K562 (cell line): ENCODE measurements at regions of chrX and their contacts with region 1.

Region 1: GRCh38 chrX:1657367-1658070 is 42.7 kb downstream of the ASMT start:
- DNase-seq: no peak
- ATAC-seq: no peak
- H3K4me3 ChIP-seq: no peak overlapping the region
- H3K27ac ChIP-seq: no peak overlapping the region
- H3K4me1 ChIP-seq: no peaks in the 10 kb centered on the region; a peak in 1 of 5 replicates
- H3K27me3 ChIP-seq: peaks cover 0 to 8% of the 10 kb centered on the region in 2 experiments; a peak in 1 of 5 replicates
- CTCF ChIP-seq: no peak
- EP300 ChIP-seq: no peak
- POLR2A ChIP-seq: no peak
- RAD21 ChIP-seq: no peak

Region 2: DNA sequence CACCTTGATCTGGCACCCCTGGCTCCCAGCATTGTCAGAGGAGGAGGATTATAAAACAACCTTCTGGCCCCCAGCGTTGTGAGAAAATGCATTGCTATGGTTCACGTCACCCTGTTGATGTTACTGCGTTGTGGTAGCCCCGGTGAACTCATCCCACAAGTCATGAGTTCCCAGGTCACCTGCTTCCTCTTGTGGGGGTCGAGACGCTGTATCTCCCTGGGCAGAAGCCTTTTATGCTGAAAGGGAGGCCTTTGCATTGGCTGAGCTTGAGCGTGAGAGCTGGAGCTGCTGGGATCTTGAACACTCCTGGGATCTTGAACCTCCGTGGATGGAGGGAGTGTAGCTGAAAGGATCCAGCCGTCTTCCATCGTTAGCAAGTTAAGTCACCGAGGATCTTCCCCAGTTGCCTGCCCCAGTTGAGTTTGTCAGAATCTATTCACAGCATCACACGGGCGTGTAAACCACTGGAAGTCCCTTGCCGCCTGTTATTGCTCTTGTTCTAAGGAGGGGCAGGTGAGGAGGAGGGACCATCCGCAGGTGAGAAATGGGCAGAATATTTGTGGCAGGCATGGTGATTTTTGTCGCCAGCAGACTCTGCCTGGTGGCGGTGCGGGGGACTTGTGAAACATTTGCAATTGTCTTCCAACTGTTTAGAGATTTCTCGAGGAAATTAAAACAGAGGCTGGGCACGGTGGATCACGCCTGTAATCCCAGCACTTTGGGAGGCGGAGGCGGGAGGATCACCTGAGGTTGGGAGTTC is 257.3 kb after region 1 on chrX:
- CTCF ChIA-PET with region 1: no interaction called
- POLR2A ChIA-PET with region 1: no interaction called
- in situ Hi-C with region 1: no loop called
- intact Hi-C with region 1: no loop called
- DNase-seq: no peak
- ATAC-seq: no peak
- H3K4me3 ChIP-seq: no peak overlapping the region
- H3K27ac ChIP-seq: no peak overlapping the region
- H3K4me1 ChIP-seq: no peaks in the 10 kb centered on the region; a peak in 2 of 5 replicates
- H3K27me3 ChIP-seq: no peaks in the 10 kb centered on the region
- CTCF ChIP-seq: no peak
- EP300 ChIP-seq: no peak
- POLR2A ChIP-seq: no peak
- RAD21 ChIP-seq: no peak

Region 3: DNA sequence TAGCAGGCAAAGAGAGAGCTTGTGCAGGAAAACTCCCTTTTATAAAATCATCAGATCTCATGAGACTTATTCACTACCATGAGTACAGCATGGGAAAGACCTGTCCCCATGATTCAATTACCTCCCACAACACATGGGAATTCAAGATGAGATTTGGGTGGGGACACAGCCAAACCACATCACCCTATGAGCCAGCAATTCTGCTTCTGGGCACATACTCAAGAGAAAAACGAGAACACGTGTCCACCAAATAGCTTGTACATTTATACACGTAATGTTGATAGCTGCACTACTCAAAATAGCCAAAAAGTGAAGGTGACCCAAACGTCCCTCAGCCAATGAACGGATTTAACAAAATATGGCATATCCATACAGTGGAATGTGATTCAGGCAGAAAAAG is 937.7 kb after region 1 on chrX:
- CTCF ChIA-PET with region 1: no interaction called
- POLR2A ChIA-PET with region 1: no interaction called
- in situ Hi-C with region 1: loop called (anchors 25 kb)
- intact Hi-C with region 1: loop called (anchors 1 kb)
- DNase-seq: no peak
- ATAC-seq: no peak
- H3K4me3 ChIP-seq: no peak overlapping the region
- H3K27ac ChIP-seq: no peak overlapping the region
- H3K4me1 ChIP-seq: no peaks in the 10 kb centered on the region
- H3K27me3 ChIP-seq: no peaks in the 10 kb centered on the region
- CTCF ChIP-seq: no peak
- EP300 ChIP-seq: no peak
- POLR2A ChIP-seq: no peak
- RAD21 ChIP-seq: no peak